ENCODE measurements at regions of chr19 and their contacts with region 1.

Region 1: GRCh38 chr19:4909897-4910593 is 744 bp downstream of the UHRF1 start:
- DNase-seq: peak; percentile 95
- ATAC-seq: peak; percentile 97
- H3K4me3 ChIP-seq: peak overlapping the region; percentile 40 to 73 (median 62)
- H3K4me3 Mint-ChIP-seq: peak overlapping the region; percentile 93
- H3K27ac ChIP-seq: no peak overlapping the region
- H3K27ac Mint-ChIP-seq: peak overlapping the region; percentile 59
- H3K4me1 ChIP-seq: peaks cover 48 to 57% of the 10 kb centered on the region in 2 donors
- H3K4me1 Mint-ChIP-seq: peaks cover 55% of the 10 kb centered on the region
- H3K27me3 ChIP-seq: peaks cover 0 to 3% (median 0%) of the 10 kb centered on the region in 4 experiments
- H3K27me3 Mint-ChIP-seq: no peaks in the 10 kb centered on the region
- CTCF ChIP-seq: no peak

Region 2: GRCh38 chr19:4217429-4218264 is 692.4 kb before region 1 on chr19:
- CTCF ChIA-PET with region 1: no interaction called
- POLR2A ChIA-PET with region 1: no interaction called
- intact Hi-C with region 1: no loop called
- DNase-seq: no peak
- ATAC-seq: no peak
- H3K4me3 ChIP-seq: no peak overlapping the region
- H3K4me3 Mint-ChIP-seq: no peak overlapping the region
- H3K27ac ChIP-seq: no peak overlapping the region
- H3K27ac Mint-ChIP-seq: no peak overlapping the region
- H3K4me1 ChIP-seq: peaks cover 0 to 20% of the 10 kb centered on the region in 2 donors
- H3K4me1 Mint-ChIP-seq: peaks cover 10% of the 10 kb centered on the region
- H3K27me3 ChIP-seq: no peaks in the 10 kb centered on the region
- H3K27me3 Mint-ChIP-seq: no peaks in the 10 kb centered on the region
- CTCF ChIP-seq: no peak

Region 3: DNA sequence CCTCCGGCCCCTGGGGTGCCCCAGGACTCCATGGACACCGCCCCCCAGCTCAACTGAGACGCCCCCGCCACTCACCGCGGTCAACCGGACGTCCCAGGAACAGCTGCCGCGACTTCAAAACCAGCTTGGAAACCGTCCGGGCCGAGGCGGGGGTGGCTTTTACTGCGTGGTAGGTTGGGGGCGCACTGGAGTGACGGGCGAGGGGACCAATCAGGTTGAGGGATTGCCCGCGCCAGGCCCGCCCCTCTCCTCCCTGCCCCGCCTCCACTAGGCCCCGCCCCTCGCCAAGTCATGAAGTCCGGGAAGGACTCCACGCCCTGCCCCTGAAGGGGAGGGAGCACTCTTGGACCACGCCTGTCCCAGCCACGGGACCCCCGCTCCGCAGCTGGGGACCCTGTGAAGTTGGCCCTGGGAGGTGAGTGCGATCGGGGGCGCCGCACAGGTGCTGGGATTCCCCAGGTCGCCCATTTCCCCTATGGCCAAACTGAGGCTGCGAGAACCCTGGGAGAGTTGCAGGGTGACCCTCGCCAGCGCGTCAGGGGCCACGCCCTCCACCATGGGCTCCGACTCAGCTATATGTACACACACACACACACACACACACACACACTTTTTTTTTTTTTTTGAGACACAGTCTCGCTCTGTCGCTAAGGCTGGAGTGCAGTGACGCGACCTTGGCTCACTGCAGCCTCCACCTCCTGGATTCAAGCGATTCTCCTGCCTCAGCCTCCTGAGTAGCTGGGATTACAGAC is 42.3 kb before region 1 on chr19 and contains the start of gene PLIN3:
- CTCF ChIA-PET with region 1: interaction called, 219 read pairs
- POLR2A ChIA-PET with region 1: interaction called, 3 read pairs
- intact Hi-C with region 1: loop called (anchors 1 kb)
- DNase-seq: peak; percentile 94
- ATAC-seq: peak; percentile 95
- H3K4me3 ChIP-seq: peak within 1 kb of the TSS; percentile 66 to 87 (median 80)
- H3K4me3 Mint-ChIP-seq: peak within 1 kb of the TSS; percentile 88
- H3K27ac ChIP-seq: peak within 1 kb of the TSS; percentile 56 to 77
- H3K27ac Mint-ChIP-seq: peak within 1 kb of the TSS; percentile 82
- H3K4me1 ChIP-seq: peaks cover 6 to 28% of the 10 kb centered on the region in 2 donors
- H3K4me1 Mint-ChIP-seq: peaks cover 22% of the 10 kb centered on the region
- H3K27me3 ChIP-seq: no peaks in the 10 kb centered on the region
- H3K27me3 Mint-ChIP-seq: peaks cover 2% of the 10 kb centered on the region
- CTCF ChIP-seq: no peak
- total RNA-seq, gene PLIN3: 26.5 and 34.3 TPM in 2 replicates

Region 4: GRCh38 chr19:4873930-4874329 is 36.1 kb before region 1 on chr19:
- CTCF ChIA-PET with region 1: interaction called, 219 read pairs
- POLR2A ChIA-PET with region 1: interaction called, 3 read pairs
- intact Hi-C with region 1: loop called (anchors 1 kb)
- DNase-seq: no peak
- ATAC-seq: no peak
- H3K4me3 ChIP-seq: no peak overlapping the region
- H3K4me3 Mint-ChIP-seq: no peak overlapping the region
- H3K27ac ChIP-seq: no peak overlapping the region
- H3K27ac Mint-ChIP-seq: no peak overlapping the region
- H3K4me1 ChIP-seq: peaks cover 13 to 23% of the 10 kb centered on the region in 2 donors
- H3K4me1 Mint-ChIP-seq: peaks cover 10% of the 10 kb centered on the region
- H3K27me3 ChIP-seq: peaks cover 0 to 14% (median 1%) of the 10 kb centered on the region in 4 experiments
- H3K27me3 Mint-ChIP-seq: peaks cover 6% of the 10 kb centered on the region
- CTCF ChIP-seq: no peak

Region 5: DNA sequence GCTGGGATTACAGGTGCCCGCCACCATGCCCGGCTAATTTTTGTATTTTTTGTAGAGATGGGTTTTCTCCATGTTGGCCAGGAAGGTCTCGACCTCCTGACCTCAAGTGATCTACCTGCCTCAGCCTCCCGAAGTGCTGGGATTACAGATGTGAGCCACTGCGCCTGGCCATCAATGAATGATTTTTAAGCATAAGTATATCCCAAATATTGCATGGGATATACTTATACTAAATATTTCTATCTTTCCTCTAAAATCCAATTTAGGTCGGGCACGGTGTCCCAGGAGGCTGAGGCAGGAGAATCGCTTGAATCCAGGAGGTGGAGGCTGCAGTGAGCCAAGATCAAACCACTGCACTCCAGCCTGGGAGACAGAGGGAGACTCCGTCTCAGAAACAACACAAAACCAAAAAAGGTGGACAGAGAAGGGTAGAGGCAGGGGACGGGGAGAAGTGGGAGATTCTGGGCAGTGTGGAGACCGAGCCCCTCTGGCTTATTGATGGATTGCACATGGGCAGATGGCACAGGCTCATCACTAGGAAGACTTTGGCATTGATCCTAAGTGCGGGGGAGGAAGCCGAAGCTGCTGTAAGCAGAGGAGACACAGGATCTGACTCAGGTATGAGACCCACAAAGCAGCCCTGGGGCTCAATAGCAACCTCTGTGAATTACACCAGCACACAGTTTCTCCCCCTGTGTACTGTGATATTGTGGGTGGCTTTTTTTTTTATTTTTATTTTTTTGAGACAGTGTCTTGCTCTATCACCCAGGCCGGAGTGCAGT is 20.8 kb before region 1 on chr19:
- CTCF ChIA-PET with region 1: no interaction called
- POLR2A ChIA-PET with region 1: interaction called, 11 read pairs
- intact Hi-C with region 1: no loop called
- DNase-seq: no peak
- ATAC-seq: no peak
- H3K4me3 ChIP-seq: no peak overlapping the region
- H3K4me3 Mint-ChIP-seq: no peak overlapping the region
- H3K27ac ChIP-seq: no peak overlapping the region
- H3K27ac Mint-ChIP-seq: no peak overlapping the region
- H3K4me1 ChIP-seq: no peaks in the 10 kb centered on the region
- H3K4me1 Mint-ChIP-seq: no peaks in the 10 kb centered on the region
- H3K27me3 ChIP-seq: no peaks in the 10 kb centered on the region
- H3K27me3 Mint-ChIP-seq: no peaks in the 10 kb centered on the region
- CTCF ChIP-seq: no peak

Region 6: DNA sequence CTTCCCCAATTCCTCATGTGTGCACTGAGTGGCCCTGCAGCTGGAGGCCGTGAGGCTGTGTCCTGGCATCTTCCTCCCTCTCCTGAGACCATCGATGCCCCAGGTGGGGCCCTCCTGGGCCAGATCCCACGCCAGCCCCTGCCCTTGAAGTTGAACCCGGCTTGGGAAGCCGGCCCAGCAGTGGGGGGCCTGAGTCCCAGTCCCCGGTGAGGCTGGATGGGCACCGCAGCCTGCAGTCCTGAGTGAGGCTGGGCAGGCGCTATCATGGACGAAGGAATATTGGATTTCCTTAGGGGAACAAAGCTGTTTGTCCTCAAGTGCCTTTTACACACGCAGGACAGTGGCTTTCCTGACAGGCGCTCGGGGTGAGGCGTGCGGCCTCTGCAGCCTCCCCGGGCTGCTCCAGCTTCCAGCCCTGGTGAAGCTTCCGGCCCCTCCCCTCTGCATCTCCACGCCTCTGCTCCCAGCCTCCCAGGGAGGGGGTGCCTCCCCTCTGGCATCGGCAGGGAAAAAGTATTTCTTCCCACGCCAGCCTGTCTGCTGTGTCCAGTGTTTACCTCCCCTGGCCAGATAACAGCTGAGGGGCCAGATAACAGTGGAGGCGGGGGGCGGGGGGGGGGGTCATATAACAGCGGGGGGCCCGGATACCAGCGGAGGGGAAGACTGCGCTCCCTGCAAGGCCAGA is 218.3 kb after region 1 on chr19:
- CTCF ChIA-PET with region 1: no interaction called
- POLR2A ChIA-PET with region 1: interaction called, 9 read pairs
- intact Hi-C with region 1: loop called (anchors 2 kb)
- DNase-seq: no peak
- ATAC-seq: no peak
- H3K4me3 ChIP-seq: peak overlapping the region in 4 of 5 experiments; percentile 31 to 53 (median 34)
- H3K4me3 Mint-ChIP-seq: peak overlapping the region; percentile 84
- H3K27ac ChIP-seq: peak overlapping the region; percentile 100
- H3K27ac Mint-ChIP-seq: peak overlapping the region; percentile 97
- H3K4me1 ChIP-seq: peaks cover 72 to 85% of the 10 kb centered on the region in 2 donors
- H3K4me1 Mint-ChIP-seq: peaks cover 80% of the 10 kb centered on the region
- H3K27me3 ChIP-seq: no peaks in the 10 kb centered on the region
- H3K27me3 Mint-ChIP-seq: no peaks in the 10 kb centered on the region
- CTCF ChIP-seq: no peak

Measured in B cell (primary cell).